ENCODE measurements at regions of chr6 and their contacts with region 1.

Region 1: GRCh38 chr6:149467265-149467664 is 17.5 kb downstream of the ZC3H12D start:
- DNase-seq: no peak
- ATAC-seq: no peak

Region 2: DNA sequence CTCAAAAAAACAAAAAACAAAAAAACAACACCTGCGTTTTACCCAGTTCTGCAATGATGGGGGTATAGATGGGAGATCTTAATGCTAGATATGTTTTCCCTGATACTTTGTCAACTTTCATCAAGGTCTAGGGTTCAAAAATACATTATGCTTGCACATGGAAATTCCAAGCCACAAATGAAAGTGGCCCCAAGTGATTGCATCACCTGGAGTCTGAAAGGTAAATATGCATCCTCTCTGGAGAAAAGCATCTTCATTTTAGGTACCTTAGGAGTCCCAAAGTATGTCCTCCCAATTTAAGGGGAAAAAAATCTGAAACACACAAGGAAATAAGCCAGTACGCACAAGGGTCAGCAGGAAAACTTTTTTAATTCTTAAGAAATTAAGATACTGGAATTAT is 30.1 kb after region 1 on chr6:
- intact Hi-C with region 1: loop called (anchors 2 kb)
- DNase-seq: no peak
- ATAC-seq: no peak